Endothelial cell of umbilical vein (primary cell): ENCODE measurements at regions of chr11 and their contacts with region 1.

Region 1: DNA sequence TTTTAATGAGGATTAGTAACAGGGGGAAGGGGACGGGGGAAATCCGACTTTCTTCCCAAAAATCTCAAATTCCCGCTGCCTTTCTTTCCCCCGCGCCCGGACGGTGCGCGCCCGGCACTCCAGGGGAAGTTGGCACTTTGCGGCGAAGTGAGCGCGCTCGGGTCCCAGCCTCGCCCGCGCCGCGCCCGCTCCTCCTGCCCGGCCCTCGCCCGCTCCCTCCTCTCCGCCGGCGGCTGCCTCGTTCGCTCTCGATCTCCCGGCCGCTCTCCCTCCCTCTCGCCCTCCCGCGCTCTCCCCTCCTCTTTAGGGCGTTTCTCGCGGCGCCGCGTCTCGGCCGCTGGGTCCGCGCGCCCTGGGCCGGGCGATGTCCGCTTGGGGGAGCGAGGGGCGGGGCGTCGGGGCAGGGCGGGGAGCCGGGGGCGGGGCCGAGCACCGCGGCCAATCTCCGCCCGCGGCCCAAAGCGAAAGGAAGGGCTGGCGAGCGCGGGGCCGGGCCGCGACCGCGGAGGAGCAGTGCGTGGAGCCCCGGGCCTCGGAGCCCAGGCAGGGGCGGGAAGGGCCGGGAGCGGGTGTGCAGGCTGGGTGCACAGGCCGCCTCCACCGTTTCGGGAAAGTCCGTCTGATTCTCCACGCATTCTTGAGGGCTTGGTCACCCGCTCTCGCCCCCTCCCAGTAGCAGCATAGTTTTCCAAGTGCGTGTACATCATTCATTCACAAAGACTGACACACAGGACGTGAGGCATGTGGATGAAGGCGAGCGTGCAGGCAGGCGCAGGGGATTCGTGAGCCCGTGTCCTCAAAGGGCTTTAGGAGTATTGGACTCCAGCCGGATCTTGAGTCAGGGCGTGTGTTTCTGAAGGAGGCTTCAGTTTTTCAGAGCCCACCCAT is 65.1 kb downstream of the ETS1 start:
- DNase-seq: peak; percentile 97
- H3K4me3 ChIP-seq: peak overlapping the region; percentile 68 to 98 (median 97)
- H3K27ac ChIP-seq: peak overlapping the region; percentile 99
- H3K4me1 ChIP-seq: peaks cover 52% of the 10 kb centered on the region
- H3K27me3 ChIP-seq: no peaks in the 10 kb centered on the region
- CTCF ChIP-seq: no peak
- POLR2A ChIP-seq: peak; percentile 69

Region 2: DNA sequence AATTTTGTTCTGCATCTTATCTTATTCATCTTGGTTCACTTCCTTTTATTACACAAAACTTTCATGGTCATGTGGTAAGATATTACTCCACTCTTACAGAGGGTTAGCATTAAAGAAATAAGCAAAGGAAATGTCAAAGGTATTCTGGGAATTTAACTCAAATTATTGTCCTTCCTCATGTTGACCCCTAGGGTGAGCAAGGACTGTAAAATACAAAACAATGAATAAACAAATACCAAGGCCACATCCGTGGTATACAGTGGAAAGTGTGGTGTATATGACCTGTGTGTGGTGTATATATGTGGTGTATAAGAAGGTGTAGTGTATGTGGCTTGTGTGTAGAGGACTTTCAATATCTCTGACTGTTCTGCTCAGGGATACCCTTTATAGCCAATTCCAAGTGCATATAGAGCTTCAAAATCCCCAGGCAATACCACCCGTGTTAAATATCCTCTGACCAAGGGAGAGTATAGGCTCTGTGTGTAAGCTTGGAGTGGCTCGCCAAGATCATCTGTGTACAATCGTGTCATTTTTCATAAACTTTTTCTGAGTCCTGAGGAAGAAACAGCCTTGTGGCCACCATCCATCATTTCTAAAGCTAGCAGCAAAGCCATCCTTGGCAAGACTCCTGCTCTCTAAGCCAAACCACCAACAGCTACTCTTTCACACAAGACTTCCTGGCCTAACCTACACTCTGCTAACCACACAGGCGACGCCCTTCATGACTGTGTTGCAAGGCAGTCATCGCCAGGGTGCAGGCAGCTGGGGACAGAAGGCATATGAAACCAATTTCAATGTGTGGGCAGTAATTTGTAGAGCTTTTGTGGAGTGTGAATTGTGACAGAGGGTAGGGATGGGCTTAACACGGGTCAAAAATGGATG is 482.9 kb before region 1 on chr11:
- CTCF ChIA-PET with region 1: no interaction called
- POLR2A ChIA-PET with region 1: no interaction called
- dilution Hi-C with region 1: no loop called
- intact Hi-C with region 1: loop called (anchors 5 kb)
- DNase-seq: peak; percentile 74
- H3K4me3 ChIP-seq: no peak overlapping the region
- H3K27ac ChIP-seq: no peak overlapping the region
- H3K4me1 ChIP-seq: peaks cover 14% of the 10 kb centered on the region
- H3K27me3 ChIP-seq: no peaks in the 10 kb centered on the region
- CTCF ChIP-seq: no peak
- POLR2A ChIP-seq: no peak

Region 3: GRCh38 chr11:128290106-128290840 is 232.0 kb before region 1 on chr11:
- CTCF ChIA-PET with region 1: interaction called, 14 read pairs
- POLR2A ChIA-PET with region 1: no interaction called
- dilution Hi-C with region 1: no loop called
- intact Hi-C with region 1: loop called (anchors 1 kb)
- DNase-seq: peak; percentile 77
- H3K4me3 ChIP-seq: no peak overlapping the region
- H3K27ac ChIP-seq: no peak overlapping the region
- H3K4me1 ChIP-seq: no peaks in the 10 kb centered on the region
- H3K27me3 ChIP-seq: no peaks in the 10 kb centered on the region
- CTCF ChIP-seq: peak; percentile 71 to 72
- POLR2A ChIP-seq: no peak

Region 4: DNA sequence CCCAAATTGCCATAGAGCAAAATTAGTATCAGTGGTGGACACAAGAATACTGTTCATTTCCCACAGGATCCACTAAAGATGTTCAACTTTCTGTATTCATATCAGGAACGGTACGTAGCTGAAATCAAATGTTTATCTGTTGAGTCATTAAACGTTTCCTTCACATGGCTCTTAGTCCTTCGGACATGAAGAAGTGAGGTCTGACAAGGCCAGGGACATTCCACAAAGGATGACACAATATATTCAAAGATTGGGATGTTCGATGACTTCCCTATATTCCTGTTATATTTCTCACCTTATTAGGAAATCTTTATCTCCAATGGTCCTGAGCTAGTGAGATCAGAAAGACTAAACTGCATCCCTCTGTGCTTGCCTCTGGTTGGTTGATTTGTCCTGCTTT is 64.0 kb before region 1 on chr11:
- CTCF ChIA-PET with region 1: no interaction called
- POLR2A ChIA-PET with region 1: no interaction called
- dilution Hi-C with region 1: no loop called
- intact Hi-C with region 1: loop called (anchors 1 kb)
- DNase-seq: peak; percentile 62
- H3K4me3 ChIP-seq: no peak overlapping the region
- H3K27ac ChIP-seq: peak overlapping the region; percentile 61
- H3K4me1 ChIP-seq: peaks cover 11% of the 10 kb centered on the region
- H3K27me3 ChIP-seq: no peaks in the 10 kb centered on the region
- CTCF ChIP-seq: no peak
- POLR2A ChIP-seq: no peak

Region 5: DNA sequence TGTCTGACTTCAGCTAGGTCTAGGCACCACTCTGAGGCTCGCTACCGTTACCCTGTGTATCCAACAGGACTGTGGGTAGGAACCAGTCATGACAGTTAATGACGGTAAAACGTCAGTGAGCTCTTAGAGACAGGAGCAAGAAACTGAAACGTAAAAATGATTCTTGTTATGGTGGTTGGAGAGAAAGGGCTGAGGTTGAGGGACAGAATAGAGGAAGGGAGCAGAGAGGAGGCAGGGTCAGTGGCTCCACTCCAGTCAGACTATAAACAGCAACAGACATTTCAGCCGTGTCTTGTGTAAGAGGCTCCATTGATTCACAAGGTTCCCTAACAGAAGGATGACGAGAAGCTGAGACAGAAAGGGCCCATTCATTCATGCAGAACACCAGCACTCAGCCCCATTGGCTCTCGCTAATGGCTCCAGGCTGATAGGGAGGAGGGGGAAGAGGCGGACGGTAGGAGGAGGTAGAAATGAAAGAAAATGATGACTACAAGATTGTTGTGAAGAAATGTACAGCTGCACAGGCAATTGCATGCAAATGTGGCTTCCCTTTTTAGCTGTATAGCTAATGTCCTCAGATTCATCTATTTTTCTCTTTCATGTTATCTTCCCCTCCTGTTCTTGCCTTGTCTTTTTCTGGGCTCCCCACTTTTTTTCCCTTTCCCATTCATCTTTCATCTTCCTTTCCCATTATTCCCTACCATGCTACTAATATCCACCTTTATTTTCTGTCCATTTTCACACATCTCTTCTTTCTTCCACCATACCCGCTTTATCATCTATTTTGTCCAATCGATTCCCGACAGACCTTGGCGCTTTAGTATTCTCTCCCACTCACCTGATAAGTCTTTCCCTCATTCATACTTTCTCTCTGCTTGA is 30.7 kb after region 1 on chr11:
- CTCF ChIA-PET with region 1: interaction called, 4 read pairs
- POLR2A ChIA-PET with region 1: interaction called, 4 read pairs
- dilution Hi-C with region 1: no loop called
- intact Hi-C with region 1: loop called (anchors 1 kb)
- DNase-seq: no peak
- H3K4me3 ChIP-seq: no peak overlapping the region
- H3K27ac ChIP-seq: no peak overlapping the region
- H3K4me1 ChIP-seq: peaks cover 11% of the 10 kb centered on the region
- H3K27me3 ChIP-seq: peaks cover 4 to 6% of the 10 kb centered on the region in 2 experiments
- CTCF ChIP-seq: no peak
- POLR2A ChIP-seq: no peak

Region 6: GRCh38 chr11:128603752-128604414 is 81.6 kb after region 1 on chr11:
- CTCF ChIA-PET with region 1: no interaction called
- POLR2A ChIA-PET with region 1: no interaction called
- dilution Hi-C with region 1: no loop called
- intact Hi-C with region 1: loop called (anchors 2 kb)
- DNase-seq: no peak
- H3K4me3 ChIP-seq: no peak overlapping the region
- H3K27ac ChIP-seq: no peak overlapping the region
- H3K4me1 ChIP-seq: no peaks in the 10 kb centered on the region
- H3K27me3 ChIP-seq: peaks cover under 1 to 12% of the 10 kb centered on the region in 2 experiments
- CTCF ChIP-seq: no peak
- POLR2A ChIP-seq: no peak

Region 7: DNA sequence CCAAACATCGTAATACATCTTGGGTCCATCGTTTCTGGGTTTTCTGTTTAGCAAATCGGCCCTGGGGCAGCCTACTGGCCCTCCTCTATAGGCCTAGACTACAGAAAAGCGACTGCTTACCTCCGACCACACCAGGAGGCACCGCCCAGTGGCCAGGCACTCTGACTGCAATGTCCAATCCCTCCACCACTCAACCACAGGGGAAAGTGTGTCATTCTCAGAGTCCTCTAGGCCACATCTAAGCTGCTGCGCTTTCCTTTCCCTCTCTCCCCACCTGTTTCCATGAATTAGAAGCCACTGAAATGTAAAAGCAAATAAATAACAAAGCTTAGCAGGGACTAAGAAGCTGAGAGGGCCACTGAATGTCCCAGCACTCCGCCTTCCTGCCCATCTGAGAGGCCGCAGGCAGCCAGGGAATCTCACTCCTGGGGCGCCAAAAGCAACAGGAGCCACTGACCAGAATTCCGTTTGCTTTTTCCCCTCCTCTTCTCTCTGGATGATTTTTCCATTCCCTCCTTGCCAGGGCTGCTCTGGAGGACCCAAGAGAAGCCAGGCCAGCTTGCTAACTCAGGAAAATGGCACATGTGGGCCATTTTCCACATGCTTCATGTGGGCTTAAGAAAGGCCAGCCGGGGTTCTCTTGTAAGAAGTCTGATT is 121.5 kb after region 1 on chr11:
- CTCF ChIA-PET with region 1: no interaction called
- POLR2A ChIA-PET with region 1: no interaction called
- dilution Hi-C with region 1: no loop called
- intact Hi-C with region 1: no loop called
- DNase-seq: no peak
- H3K4me3 ChIP-seq: no peak overlapping the region
- H3K27ac ChIP-seq: no peak overlapping the region
- H3K4me1 ChIP-seq: peaks cover 8% of the 10 kb centered on the region
- H3K27me3 ChIP-seq: no peaks in the 10 kb centered on the region
- CTCF ChIP-seq: peak in 1 of 2 donors; percentile 19
- POLR2A ChIP-seq: no peak

Region 8: GRCh38 chr11:128802358-128802981 is 280.2 kb after region 1 on chr11:
- CTCF ChIA-PET with region 1: no interaction called
- POLR2A ChIA-PET with region 1: no interaction called
- dilution Hi-C with region 1: no loop called
- intact Hi-C with region 1: no loop called
- DNase-seq: peak; percentile 36
- H3K4me3 ChIP-seq: no peak overlapping the region
- H3K27ac ChIP-seq: no peak overlapping the region
- H3K4me1 ChIP-seq: no peaks in the 10 kb centered on the region
- H3K27me3 ChIP-seq: no peaks in the 10 kb centered on the region
- CTCF ChIP-seq: peak; percentile 43 to 44
- POLR2A ChIP-seq: no peak